Caco-2 (cell line): ENCODE measurements at regions of chr6 and their contacts with region 1.

Region 1: DNA sequence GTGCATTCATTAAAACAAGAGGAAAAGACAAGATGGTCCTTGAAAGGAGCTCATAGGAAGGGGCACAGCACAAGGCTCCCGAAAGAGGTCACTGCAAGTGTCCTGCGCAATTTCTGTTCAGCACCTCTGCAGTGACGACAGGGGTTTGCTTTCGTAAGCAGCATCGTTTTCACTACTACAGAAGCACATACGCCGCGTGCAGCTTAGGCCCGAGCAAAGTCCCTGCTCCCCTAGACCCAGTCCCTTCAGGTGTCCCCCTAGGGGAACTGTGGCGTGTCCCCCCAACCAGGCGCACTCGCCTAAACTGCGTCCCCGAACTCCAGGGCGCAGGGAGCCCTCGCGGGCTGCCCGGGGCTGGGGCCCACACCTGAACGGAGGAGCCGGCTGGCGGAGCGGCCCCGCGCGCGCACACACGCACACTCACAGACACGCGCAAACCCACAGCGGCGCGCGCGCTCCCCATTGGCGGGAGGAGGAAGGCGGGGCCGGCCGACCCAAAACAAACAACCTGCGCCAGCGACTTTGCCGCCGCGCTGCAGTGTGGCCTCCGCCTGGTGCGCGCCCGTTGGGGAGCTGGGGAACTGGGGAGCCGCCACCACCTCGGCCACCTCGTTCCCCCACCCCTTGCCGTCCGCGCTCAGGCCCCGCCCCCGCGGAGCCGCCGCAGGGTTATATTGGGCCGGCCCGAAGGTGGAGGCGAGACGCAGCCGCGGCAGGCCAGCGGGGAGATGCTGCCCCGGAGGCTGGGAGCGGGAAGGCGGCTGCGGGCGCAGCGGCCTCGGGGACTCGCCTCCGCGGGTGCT is at the start of gene FOXQ1:
- DNase-seq: peak; percentile 96 to 98
- H3K4me3 ChIP-seq: peak within 1 kb of the TSS; percentile 94
- H3K4me3 Mint-ChIP-seq: peak within 1 kb of the TSS; percentile 78
- H3K27ac Mint-ChIP-seq: peak within 1 kb of the TSS; percentile 89
- H3K4me1 ChIP-seq: peaks cover 26% of the 10 kb centered on the region
- H3K4me1 Mint-ChIP-seq: peaks cover 39% of the 10 kb centered on the region
- H3K27me3 ChIP-seq: no peaks in the 10 kb centered on the region
- H3K27me3 Mint-ChIP-seq: peaks cover 2% of the 10 kb centered on the region
- CTCF ChIP-seq: peak in 1 of 2 experiments; percentile 16
- total RNA-seq, gene FOXQ1: 170 and 191 TPM in 2 replicates

Region 2: GRCh38 chr6:347232-347631 is 964.4 kb before region 1 on chr6:
- CTCF ChIA-PET with region 1: no interaction called
- POLR2A ChIA-PET with region 1: no interaction called
- intact Hi-C with region 1: loop called (anchors 5 kb)
- DNase-seq: no peak
- H3K4me3 ChIP-seq: no peak overlapping the region
- H3K4me3 Mint-ChIP-seq: no peak overlapping the region
- H3K27ac Mint-ChIP-seq: no peak overlapping the region
- H3K4me1 ChIP-seq: no peaks in the 10 kb centered on the region
- H3K4me1 Mint-ChIP-seq: no peaks in the 10 kb centered on the region
- H3K27me3 ChIP-seq: no peaks in the 10 kb centered on the region
- H3K27me3 Mint-ChIP-seq: no peaks in the 10 kb centered on the region
- CTCF ChIP-seq: no peak

Region 3: DNA sequence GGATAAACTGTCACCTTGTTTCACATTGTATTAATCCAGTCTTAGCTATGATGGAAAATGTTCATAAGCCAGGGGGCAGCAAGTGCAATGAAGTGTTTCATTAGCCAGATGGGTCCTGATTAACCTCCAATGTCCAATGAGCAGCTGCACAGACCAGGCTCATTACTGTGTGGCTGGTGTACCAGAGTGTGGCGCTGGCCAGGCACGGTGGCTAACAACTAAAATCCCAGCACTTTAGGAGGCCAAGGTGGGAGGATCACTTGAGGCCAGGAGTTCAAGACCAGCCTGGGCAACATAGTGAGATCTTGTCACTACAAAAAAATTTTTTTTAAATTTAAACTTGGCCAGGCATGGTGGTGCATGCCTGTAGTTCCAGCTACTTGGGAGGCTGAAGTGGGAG is 201.4 kb before region 1 on chr6:
- CTCF ChIA-PET with region 1: interaction called, 3 read pairs
- POLR2A ChIA-PET with region 1: interaction called, 7 read pairs
- intact Hi-C with region 1: loop called (anchors 2 kb)
- DNase-seq: peak; percentile 25 to 46
- H3K4me3 ChIP-seq: no peak overlapping the region
- H3K4me3 Mint-ChIP-seq: no peak overlapping the region
- H3K27ac Mint-ChIP-seq: peak overlapping the region; percentile 25
- H3K4me1 ChIP-seq: peaks cover 27% of the 10 kb centered on the region
- H3K4me1 Mint-ChIP-seq: peaks cover 24% of the 10 kb centered on the region
- H3K27me3 ChIP-seq: no peaks in the 10 kb centered on the region
- H3K27me3 Mint-ChIP-seq: no peaks in the 10 kb centered on the region
- CTCF ChIP-seq: no peak

Region 4: GRCh38 chr6:1263039-1263849 is 48.4 kb before region 1 on chr6:
- CTCF ChIA-PET with region 1: interaction called, 15 read pairs
- POLR2A ChIA-PET with region 1: interaction called, 49 read pairs
- intact Hi-C with region 1: loop called (anchors 1 kb)
- DNase-seq: peak; percentile 82 to 83
- H3K4me3 ChIP-seq: no peak overlapping the region
- H3K4me3 Mint-ChIP-seq: peak overlapping the region; percentile 73
- H3K27ac Mint-ChIP-seq: peak overlapping the region; percentile 100
- H3K4me1 ChIP-seq: peaks cover 67% of the 10 kb centered on the region
- H3K4me1 Mint-ChIP-seq: peaks cover 30% of the 10 kb centered on the region
- H3K27me3 ChIP-seq: no peaks in the 10 kb centered on the region
- H3K27me3 Mint-ChIP-seq: no peaks in the 10 kb centered on the region
- CTCF ChIP-seq: peak in 1 of 2 experiments; percentile 35

Region 5: GRCh38 chr6:1335367-1336037 is 23.9 kb after region 1 on chr6:
- CTCF ChIA-PET with region 1: interaction called, 24 read pairs
- POLR2A ChIA-PET with region 1: interaction called, 15 read pairs
- intact Hi-C with region 1: loop called (anchors 1 kb)
- DNase-seq: peak; percentile 90 to 94
- H3K4me3 ChIP-seq: no peak overlapping the region
- H3K4me3 Mint-ChIP-seq: peak overlapping the region; percentile 53
- H3K27ac Mint-ChIP-seq: peak overlapping the region; percentile 74
- H3K4me1 ChIP-seq: peaks cover 26% of the 10 kb centered on the region
- H3K4me1 Mint-ChIP-seq: peaks cover 24% of the 10 kb centered on the region
- H3K27me3 ChIP-seq: no peaks in the 10 kb centered on the region
- H3K27me3 Mint-ChIP-seq: no peaks in the 10 kb centered on the region
- CTCF ChIP-seq: no peak

Region 6: DNA sequence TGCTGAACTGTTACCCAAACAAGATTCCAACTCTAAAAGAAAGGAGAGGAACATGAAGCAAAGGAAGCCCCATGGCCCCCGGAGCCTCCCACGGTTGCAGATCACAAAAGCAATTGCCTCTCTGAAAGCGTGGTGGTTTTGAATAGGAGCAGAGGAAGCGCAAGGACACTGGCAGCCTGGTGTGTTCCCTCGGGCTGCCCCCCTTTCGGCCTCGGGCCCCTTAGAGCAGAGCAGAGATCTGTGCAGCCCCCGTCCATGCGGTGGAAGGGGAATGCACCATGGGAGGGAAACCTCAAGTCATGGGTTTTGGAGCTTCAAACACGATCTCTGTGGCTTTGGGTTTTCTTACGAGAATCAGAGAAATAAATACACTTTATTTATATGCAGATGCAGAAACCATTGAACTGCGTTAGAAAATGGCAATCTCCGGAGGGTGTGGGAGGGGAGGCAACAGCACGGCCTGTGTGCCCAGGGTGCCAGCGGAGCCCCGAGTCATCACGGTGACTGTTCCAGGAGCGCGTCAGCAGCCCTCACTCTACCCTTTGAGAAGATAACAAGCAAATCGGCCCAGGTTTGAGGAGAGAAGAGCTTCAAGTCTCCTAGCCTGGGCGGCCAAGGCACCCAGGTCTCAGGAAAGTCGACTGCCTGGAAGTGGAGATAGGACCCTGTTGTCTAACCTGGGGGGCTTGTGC is 98.3 kb after region 1 on chr6:
- CTCF ChIA-PET with region 1: no interaction called
- POLR2A ChIA-PET with region 1: no interaction called
- intact Hi-C with region 1: no loop called
- DNase-seq: no peak
- H3K4me3 ChIP-seq: no peak overlapping the region
- H3K4me3 Mint-ChIP-seq: no peak overlapping the region
- H3K27ac Mint-ChIP-seq: no peak overlapping the region
- H3K4me1 ChIP-seq: no peaks in the 10 kb centered on the region
- H3K4me1 Mint-ChIP-seq: no peaks in the 10 kb centered on the region
- H3K27me3 ChIP-seq: no peaks in the 10 kb centered on the region
- H3K27me3 Mint-ChIP-seq: no peaks in the 10 kb centered on the region
- CTCF ChIP-seq: no peak